Activated naive CD4-positive, alpha-beta T cell treated with anti-CD3 and anti-CD28 coated beads for 36 hours (primary cell): ENCODE measurements at regions of chr7 and their contacts with region 1.

Region 1: DNA sequence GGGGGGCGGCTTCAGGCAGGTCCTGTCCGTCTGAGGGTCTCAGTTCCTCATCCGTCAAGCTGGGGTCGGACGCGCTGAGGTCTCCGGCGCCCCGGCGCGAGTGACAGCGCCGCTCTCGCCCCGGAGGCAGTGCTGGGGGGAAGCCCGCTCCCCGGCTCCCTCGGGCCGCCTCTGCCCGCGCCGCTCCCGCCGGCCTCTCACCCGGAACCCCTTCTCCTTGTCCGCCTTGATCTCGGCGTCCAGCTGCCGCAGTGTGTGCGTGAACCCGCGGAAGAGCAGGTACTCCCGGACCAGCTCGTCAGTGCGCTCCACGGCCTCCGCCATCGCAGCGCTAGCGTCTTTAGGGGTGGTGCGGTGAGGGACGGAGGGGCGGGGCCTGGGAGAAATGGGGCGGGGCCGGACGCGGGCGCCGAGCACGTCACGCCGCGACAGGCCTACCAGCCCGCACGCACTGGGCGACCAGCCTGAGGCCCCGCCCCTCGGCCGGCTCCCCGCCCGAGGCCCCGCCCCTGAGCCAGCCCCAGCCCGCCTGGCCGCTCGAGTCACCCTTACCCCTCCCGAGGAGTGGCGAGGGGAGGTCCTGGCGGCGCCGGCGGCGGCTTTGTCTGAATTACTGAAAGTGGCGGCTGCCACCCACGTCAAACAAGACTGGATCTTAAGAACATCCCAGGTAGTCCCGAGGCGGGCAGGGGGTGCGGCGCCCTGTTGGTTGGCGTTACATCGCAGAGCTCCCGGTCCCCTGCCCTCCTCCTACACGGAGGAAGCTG is at the start of gene WDR91:
- DNase-seq: peak; percentile 96
- H3K4me3 Mint-ChIP-seq: peak within 1 kb of the TSS; percentile 98
- H3K27ac Mint-ChIP-seq: peak within 1 kb of the TSS; percentile 85
- H3K4me1 Mint-ChIP-seq: peaks cover 41% of the 10 kb centered on the region
- H3K27me3 Mint-ChIP-seq: no peaks in the 10 kb centered on the region
- total RNA-seq, gene WDR91: 10.6 to 11.1 TPM

Region 2: DNA sequence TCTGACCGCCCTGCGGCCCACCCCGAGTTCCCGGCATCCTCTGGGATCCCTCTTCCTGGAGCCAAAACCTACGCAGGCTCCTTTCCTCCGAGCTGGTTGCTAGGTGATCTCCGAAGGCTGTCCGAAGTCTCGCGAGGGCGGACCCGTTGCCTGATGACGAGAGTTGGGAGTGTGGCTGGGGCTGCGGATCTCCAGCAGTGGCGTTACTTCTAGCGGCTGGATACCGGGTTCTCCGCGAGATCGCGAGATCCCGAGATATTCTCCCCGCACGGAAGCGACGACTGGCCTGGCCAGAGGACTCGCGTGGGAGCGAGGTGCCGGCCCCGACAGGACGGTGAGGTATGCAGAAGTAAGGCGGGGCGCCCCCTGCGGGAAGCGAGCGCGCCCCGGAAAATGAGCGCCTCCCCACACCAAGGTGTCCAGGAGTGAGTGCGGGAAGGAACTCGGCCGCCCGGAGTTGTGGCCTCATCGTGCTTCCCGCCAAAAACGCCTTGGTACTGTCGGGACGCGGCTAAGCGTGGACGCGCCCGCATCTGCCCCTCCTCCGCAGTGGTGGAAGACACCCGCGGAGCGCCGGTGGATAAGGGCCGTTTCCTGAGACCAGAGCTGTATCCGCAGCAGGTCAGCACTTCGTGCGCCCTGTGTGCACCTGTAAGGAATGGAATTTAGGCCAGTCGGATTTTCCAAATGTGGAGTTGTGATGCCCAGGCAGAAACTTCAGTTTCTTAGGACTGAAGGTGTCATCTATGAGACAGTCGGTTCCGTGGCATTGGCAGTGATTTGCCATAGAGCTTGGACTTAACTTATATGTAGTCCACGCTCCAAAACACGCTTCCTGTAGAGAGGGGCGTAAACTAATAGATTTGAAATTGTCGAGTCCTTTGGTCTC is 224.8 kb before region 1 on chr7 and contains the start of gene AGBL3:
- CTCF ChIA-PET with region 1: interaction called, 3 read pairs
- intact Hi-C with region 1: loop called (anchors 1 kb)
- DNase-seq: peak; percentile 97
- H3K4me3 Mint-ChIP-seq: peak within 1 kb of the TSS; percentile 96
- H3K27ac Mint-ChIP-seq: peak within 1 kb of the TSS; percentile 98
- H3K4me1 Mint-ChIP-seq: peaks cover 32% of the 10 kb centered on the region
- H3K27me3 Mint-ChIP-seq: no peaks in the 10 kb centered on the region
- total RNA-seq, gene AGBL3: 2.6 to 3.6 TPM

Region 3: DNA sequence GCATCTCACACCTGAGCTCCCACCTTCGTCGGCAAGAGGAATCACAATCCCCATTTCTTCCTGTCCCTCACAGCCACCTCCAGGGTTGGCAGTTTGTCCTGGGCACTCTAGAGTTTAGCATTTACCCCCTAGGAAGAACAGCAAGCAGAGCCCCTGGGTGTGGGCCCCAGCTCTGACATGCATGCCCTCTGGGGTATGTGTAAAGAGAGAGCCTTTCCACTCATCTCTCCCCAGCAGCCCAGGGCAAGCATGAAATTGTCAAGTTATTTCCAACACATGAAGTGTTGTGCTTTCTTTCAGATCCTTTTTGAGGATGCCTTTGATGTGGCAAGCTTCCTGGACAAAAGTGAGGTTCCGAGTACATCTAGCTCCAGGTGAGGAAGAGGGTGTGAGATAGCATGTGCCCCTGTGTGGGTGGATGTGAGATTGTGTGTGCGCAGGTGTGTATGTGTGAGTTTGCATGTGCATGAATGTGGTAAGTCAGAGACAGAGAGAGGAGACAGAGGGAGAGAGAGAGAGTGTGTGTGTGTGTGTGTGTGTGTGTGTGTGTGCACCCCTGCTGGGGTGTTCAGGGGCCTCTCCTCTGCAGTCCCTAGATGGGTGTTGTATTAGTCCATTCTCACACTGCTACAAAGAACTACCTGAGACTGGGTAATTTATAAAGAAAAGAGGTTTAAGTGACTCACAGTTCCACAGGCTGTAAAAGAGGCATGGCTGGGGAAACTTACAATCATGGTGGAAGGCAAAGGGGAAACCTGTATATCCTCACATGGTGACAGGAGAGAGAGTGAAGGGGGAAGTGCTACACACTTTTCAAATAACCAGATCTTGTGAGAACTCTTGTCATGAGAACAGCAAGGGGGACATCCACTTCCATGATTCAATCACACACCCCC is 40.4 kb after region 1 on chr7:
- CTCF ChIA-PET with region 1: no interaction called
- intact Hi-C with region 1: loop called (anchors 1 kb)
- DNase-seq: peak; percentile 48
- H3K4me3 Mint-ChIP-seq: no peak overlapping the region
- H3K27ac Mint-ChIP-seq: peak overlapping the region; percentile 34
- H3K4me1 Mint-ChIP-seq: peaks cover 18% of the 10 kb centered on the region
- H3K27me3 Mint-ChIP-seq: no peaks in the 10 kb centered on the region

Region 4: DNA sequence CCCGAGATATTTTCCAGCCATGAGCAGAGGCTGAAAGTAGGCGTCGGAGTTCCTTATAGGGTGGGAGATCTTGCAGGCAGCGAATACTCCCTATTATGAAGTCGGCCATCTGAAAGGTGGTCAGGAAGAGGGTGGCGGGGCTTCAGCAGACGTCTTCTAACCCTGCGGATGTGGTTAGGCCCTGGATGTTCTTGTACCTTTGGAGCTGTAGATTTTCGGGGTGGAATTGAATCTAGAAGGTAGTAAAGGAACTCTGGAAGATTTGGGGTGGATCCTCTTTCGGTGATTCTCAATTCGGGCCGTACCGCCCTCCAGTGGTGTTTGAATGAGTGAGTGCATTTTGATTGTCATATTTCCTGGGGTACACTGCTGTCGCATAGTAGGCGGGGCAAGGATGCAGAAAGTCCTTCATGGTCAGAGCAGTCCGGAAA is 347.0 kb after region 1 on chr7:
- CTCF ChIA-PET with region 1: no interaction called
- intact Hi-C with region 1: loop called (anchors 1 kb)
- DNase-seq: peak; percentile 79
- H3K4me3 Mint-ChIP-seq: no peak overlapping the region
- H3K27ac Mint-ChIP-seq: no peak overlapping the region
- H3K4me1 Mint-ChIP-seq: peaks cover 29% of the 10 kb centered on the region
- H3K27me3 Mint-ChIP-seq: no peaks in the 10 kb centered on the region

Region 5: DNA sequence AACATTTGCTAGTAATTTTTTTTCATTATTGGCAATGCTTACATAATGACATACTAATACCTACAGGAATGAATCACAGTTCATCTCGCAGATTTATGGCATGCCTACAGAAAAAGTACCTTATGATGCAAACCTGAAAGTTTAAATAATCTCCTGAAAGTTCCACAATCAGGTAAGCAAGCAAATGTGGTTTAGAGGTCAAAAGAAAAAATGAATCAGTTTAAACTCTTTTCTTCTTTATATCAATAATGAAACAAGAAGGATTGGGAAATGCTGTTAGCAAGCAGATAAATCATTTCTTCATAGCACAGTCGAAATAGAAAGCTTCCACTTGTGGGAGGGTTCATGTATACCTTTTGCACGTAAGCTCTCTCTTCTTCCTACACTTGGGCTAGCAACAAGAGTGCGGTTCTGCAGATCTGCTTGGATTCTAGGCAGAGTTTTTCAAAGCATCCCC is 819.5 kb after region 1 on chr7:
- CTCF ChIA-PET with region 1: no interaction called
- intact Hi-C with region 1: loop called (anchors 2 kb)
- DNase-seq: peak; percentile 38
- H3K4me3 Mint-ChIP-seq: no peak overlapping the region
- H3K27ac Mint-ChIP-seq: peak overlapping the region; percentile 80
- H3K4me1 Mint-ChIP-seq: peaks cover 59% of the 10 kb centered on the region
- H3K27me3 Mint-ChIP-seq: peaks cover 13% of the 10 kb centered on the region